ENCODE measurements at regions of chr11 and their contacts with region 1.

Region 1: DNA sequence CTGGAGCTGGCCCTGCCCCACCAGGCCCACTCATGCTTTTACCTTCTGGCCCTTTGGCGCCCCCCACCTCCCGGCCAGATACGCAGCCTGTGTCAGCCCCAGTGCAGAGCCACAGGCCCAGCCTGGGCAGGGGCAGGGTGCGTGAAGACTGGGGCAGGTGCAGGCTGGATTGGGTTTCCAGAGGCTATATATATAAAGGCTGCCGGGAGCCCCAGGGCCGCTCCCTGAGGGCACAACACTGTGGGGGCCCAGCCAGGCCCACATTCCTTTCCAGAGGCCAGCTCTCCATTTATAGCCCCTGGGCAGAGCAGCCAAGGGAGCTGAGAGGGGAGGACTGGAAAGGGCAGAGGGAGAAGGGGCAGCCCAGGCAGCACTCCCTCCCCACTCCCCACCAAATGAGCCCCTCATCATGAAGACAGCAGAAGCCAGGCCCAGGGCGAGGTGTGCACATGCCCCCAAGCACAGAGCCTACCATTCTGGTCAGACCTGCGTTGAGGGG is 5.0 kb upstream of the MYOD1 start:
- DNase-seq: no peak
- ATAC-seq: no peak
- H3K4me3 ChIP-seq: no peak overlapping the region
- H3K27ac ChIP-seq: no peak overlapping the region
- H3K4me1 ChIP-seq: no peaks in the 10 kb centered on the region
- H3K27me3 ChIP-seq: peaks cover 8 to 9% of the 10 kb centered on the region in 2 donors
- CTCF ChIP-seq: no peak
- POLR2A ChIP-seq: no peak

Region 2: GRCh38 chr11:17610085-17610894 is 104.1 kb before region 1 on chr11:
- intact Hi-C with region 1: loop called in 1 of 2 experiments (anchors 5 kb)
- DNase-seq: no peak
- ATAC-seq: no peak
- H3K4me3 ChIP-seq: no peak overlapping the region
- H3K27ac ChIP-seq: no peak overlapping the region
- H3K4me1 ChIP-seq: no peaks in the 10 kb centered on the region
- H3K27me3 ChIP-seq: no peaks in the 10 kb centered on the region
- CTCF ChIP-seq: no peak
- POLR2A ChIP-seq: no peak

Measured in right lobe of liver (tissue), 6 donors.